CD4-positive, alpha-beta T cell (primary cell): ENCODE measurements at regions of chr20 and their contacts with region 1.

Region 1: DNA sequence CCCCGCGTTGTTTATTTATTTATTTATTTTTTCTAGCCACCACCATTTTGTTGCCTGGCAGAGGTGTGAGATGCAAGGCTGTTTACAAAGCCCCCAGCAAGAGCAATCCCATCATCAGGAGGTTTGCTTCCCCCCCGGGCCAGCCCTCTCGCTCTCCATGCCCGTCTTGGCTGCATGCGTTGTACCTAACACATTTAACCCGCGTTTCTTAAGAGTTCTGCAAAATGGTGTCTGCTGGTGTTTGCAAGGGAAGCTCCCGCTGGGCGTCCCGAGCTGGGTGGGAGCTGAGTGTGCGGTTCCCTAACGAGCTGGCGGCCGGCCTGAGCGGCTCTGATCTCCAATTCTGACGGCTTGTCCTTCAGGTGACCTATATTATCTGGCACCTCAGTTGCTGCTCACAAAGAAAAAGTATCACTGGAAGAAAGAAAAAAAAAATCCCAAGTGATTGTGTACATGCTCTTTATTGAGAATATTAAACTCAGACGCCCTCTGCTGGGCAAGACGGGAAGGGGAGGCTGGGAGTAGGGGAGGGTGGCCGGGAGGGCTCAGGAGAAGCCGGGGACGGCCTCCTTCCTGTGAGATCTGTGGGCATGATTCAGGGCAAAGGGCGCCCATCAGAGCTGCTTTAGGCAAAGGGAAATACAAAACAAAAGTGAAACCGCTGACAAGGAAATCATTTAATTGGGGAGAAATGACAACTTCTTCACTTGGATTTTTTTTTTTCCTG is 154.8 kb downstream of the BCAS1 start:
- DNase-seq: peak; percentile 88 to 99 (median 94)
- ATAC-seq: peak; percentile 94
- H3K4me3 ChIP-seq: peak overlapping the region; percentile 68
- H3K4me3 Mint-ChIP-seq: peak overlapping the region; percentile 88
- H3K27ac ChIP-seq: peak overlapping the region in 1 of 2 donors; percentile 54
- H3K27ac Mint-ChIP-seq: peak overlapping the region; percentile 69
- H3K4me1 ChIP-seq: peaks cover 24% of the 10 kb centered on the region
- H3K4me1 Mint-ChIP-seq: peaks cover 21% of the 10 kb centered on the region
- H3K27me3 ChIP-seq: no peaks in the 10 kb centered on the region
- H3K27me3 Mint-ChIP-seq: no peaks in the 10 kb centered on the region
- CTCF ChIP-seq: peak; percentile 86

Region 2: GRCh38 chr20:53660078-53660909 is 255.3 kb before region 1 on chr20:
- CTCF ChIA-PET with region 1: interaction called, 11 read pairs
- POLR2A ChIA-PET with region 1: interaction called, 6 read pairs
- intact Hi-C with region 1: loop called in 1 of 2 experiments (anchors 5 kb)
- DNase-seq: peak in 9 of 14 experiments; percentile 11 to 50 (median 38)
- ATAC-seq: peak; percentile 41
- H3K4me3 ChIP-seq: peak overlapping the region; percentile 53
- H3K4me3 Mint-ChIP-seq: peak overlapping the region; percentile 91
- H3K27ac ChIP-seq: peak overlapping the region; percentile 49 to 66
- H3K27ac Mint-ChIP-seq: peak overlapping the region; percentile 92
- H3K4me1 ChIP-seq: peaks cover 33% of the 10 kb centered on the region
- H3K4me1 Mint-ChIP-seq: peaks cover 76% of the 10 kb centered on the region
- H3K27me3 ChIP-seq: no peaks in the 10 kb centered on the region
- H3K27me3 Mint-ChIP-seq: no peaks in the 10 kb centered on the region
- CTCF ChIP-seq: no peak

Region 3: GRCh38 chr20:53750827-53751619 is 164.6 kb before region 1 on chr20:
- CTCF ChIA-PET with region 1: interaction called, 4 read pairs
- POLR2A ChIA-PET with region 1: interaction called, 4 read pairs
- intact Hi-C with region 1: loop called (anchors 5 to 10 kb)
- DNase-seq: peak in 8 of 14 experiments; percentile 2 to 75 (median 34)
- ATAC-seq: peak; percentile 57
- H3K4me3 ChIP-seq: no peak overlapping the region
- H3K4me3 Mint-ChIP-seq: peak overlapping the region; percentile 65
- H3K27ac ChIP-seq: peak overlapping the region; percentile 53 to 74
- H3K27ac Mint-ChIP-seq: peak overlapping the region; percentile 93
- H3K4me1 ChIP-seq: peaks cover 60% of the 10 kb centered on the region
- H3K4me1 Mint-ChIP-seq: peaks cover 76% of the 10 kb centered on the region
- H3K27me3 ChIP-seq: no peaks in the 10 kb centered on the region
- H3K27me3 Mint-ChIP-seq: no peaks in the 10 kb centered on the region
- CTCF ChIP-seq: no peak

Region 4: DNA sequence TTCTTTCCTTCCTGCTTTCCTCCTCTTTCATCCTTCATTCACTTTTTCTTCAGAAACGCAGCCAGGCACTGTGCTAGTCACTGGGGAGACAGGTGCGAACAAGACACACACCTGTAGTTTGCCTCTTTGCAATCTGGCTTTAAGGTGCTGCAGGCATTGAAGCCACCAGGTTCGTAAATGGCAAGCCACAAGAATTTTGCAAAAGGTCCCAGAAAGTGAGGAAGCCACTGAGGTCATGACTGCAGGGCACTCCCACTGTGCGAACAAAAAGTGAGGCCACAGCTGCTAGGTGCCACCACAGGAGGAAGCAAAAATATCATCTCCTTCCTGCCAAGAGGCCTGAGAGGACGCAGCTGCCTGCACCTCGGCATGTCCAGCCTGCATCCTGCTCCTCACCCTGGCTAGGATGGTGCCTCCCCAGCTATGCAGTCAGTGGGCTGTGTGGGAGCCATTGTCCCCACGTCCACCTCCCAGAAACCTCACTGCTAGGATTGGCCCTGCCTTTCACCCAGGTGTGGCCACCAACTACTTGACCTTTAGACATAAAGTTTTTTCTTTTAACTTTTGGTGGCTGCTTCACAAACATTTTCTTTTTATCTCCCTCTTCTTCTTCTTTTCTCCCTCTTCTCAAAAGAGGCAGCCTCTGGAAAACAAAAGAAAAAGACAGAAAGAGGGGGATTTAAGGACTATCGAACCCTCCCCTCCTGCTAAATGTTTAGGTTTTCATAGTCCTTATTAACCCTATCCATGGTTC is 76.0 kb before region 1 on chr20:
- CTCF ChIA-PET with region 1: interaction called, 5 read pairs
- POLR2A ChIA-PET with region 1: interaction called, 3 read pairs
- intact Hi-C with region 1: loop called (anchors 5 kb)
- DNase-seq: peak; percentile 43 to 91 (median 58)
- ATAC-seq: peak; percentile 73
- H3K4me3 ChIP-seq: no peak overlapping the region
- H3K4me3 Mint-ChIP-seq: peak overlapping the region; percentile 70
- H3K27ac ChIP-seq: peak overlapping the region; percentile 51 to 54
- H3K27ac Mint-ChIP-seq: peak overlapping the region; percentile 87
- H3K4me1 ChIP-seq: peaks cover 88% of the 10 kb centered on the region
- H3K4me1 Mint-ChIP-seq: peaks cover 70% of the 10 kb centered on the region
- H3K27me3 ChIP-seq: no peaks in the 10 kb centered on the region
- H3K27me3 Mint-ChIP-seq: no peaks in the 10 kb centered on the region
- CTCF ChIP-seq: no peak

Region 5: DNA sequence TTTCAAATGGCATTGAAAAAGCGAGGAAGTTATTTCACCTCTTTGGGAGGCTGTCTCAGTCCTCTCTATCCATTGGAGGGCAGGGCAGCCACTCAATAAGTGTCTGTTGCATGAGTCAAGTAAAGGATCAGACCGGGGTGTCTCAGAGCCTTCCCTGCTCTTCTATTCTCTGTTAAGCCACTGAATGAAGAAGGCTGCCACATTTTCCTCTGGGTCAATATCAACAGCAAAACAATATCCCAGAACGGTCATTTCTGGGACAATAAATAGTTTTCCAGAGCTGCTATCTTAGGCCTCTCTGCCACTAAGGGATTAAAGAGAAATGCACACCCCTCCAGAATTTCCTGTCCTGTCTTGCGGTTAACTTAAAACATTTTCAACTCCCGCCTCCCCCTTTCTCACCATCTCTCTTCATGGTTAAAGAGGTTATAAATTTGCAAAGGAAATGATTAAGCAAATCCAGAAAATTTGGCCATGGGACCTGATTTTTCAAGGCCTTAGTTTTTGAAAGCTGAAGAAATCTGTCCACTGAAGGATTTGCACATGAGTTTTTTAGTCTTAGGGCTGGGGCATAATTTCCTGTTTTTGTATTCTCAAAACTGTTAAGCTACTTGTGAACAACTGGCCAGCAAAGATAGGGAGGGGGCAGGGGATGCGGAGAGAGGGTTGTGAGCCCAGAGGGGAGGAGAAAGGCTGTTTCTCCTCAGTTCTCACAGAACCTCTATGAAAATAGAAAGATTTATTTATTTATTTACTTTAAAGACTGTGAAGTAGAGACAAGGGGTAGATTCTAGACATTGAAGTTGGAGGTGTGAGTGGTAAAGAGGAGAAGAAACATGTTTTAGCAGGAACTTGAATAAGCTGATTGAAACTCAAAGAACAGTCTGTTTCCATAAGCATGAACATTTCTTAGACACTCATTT is 19.1 kb after region 1 on chr20:
- CTCF ChIA-PET with region 1: interaction called, 15 read pairs
- POLR2A ChIA-PET with region 1: interaction called, 12 read pairs
- intact Hi-C with region 1: no loop called
- DNase-seq: peak in 5 of 14 experiments; percentile 23 to 53 (median 45)
- ATAC-seq: peak; percentile 76
- H3K4me3 ChIP-seq: no peak overlapping the region
- H3K4me3 Mint-ChIP-seq: peak overlapping the region; percentile 62
- H3K27ac ChIP-seq: peak overlapping the region in 1 of 2 donors; percentile 20
- H3K27ac Mint-ChIP-seq: peak overlapping the region; percentile 79
- H3K4me1 ChIP-seq: peaks cover 26% of the 10 kb centered on the region
- H3K4me1 Mint-ChIP-seq: peaks cover 59% of the 10 kb centered on the region
- H3K27me3 ChIP-seq: no peaks in the 10 kb centered on the region
- H3K27me3 Mint-ChIP-seq: no peaks in the 10 kb centered on the region
- CTCF ChIP-seq: no peak

Region 6: DNA sequence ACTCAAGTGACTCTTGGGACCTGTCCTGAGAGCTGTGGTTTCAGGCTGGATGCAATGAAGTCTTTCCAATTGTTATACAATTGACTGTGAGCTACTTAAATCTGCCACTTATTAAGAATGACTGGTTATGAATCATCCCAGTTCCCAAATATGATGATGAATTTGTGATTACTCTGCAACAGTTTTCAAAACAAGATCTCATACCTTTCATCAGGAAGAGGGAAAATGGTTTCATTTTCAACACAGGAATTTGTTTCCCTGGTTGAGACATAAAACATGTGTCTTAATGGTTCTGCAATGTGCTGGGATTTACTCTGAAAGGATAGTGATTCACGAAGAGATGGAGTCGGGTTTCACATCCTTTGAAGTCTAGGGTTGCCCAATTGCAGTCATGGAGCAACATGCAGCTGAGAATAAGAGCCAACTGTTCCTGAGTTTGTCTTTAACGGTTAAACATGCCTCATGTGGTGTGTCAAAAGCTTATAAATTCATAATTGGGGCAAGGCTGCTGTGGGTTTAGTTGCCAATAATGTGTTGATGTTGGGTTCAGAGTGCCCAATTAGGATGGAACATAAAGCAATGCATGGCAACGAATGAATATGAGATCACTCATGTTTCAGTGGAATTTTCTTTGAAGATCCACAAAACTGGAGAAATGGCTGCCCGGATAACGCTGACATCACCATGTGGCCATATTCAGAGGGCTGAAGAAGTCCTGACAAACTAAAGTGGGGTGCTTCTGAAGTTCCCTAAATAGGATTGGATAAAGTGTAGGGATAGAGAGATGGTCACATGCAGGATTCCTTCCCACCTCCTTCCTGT is 217.2 kb after region 1 on chr20:
- CTCF ChIA-PET with region 1: no interaction called
- POLR2A ChIA-PET with region 1: no interaction called
- intact Hi-C with region 1: no loop called
- DNase-seq: peak in 2 of 14 experiments; percentile 45 to 53
- ATAC-seq: no peak
- H3K4me3 ChIP-seq: no peak overlapping the region
- H3K4me3 Mint-ChIP-seq: no peak overlapping the region
- H3K27ac ChIP-seq: no peak overlapping the region
- H3K27ac Mint-ChIP-seq: no peak overlapping the region
- H3K4me1 ChIP-seq: no peaks in the 10 kb centered on the region
- H3K4me1 Mint-ChIP-seq: no peaks in the 10 kb centered on the region
- H3K27me3 ChIP-seq: peaks cover 0 to 5% of the 10 kb centered on the region in 2 experiments
- H3K27me3 Mint-ChIP-seq: peaks cover 7% of the 10 kb centered on the region
- CTCF ChIP-seq: no peak

Region 7: DNA sequence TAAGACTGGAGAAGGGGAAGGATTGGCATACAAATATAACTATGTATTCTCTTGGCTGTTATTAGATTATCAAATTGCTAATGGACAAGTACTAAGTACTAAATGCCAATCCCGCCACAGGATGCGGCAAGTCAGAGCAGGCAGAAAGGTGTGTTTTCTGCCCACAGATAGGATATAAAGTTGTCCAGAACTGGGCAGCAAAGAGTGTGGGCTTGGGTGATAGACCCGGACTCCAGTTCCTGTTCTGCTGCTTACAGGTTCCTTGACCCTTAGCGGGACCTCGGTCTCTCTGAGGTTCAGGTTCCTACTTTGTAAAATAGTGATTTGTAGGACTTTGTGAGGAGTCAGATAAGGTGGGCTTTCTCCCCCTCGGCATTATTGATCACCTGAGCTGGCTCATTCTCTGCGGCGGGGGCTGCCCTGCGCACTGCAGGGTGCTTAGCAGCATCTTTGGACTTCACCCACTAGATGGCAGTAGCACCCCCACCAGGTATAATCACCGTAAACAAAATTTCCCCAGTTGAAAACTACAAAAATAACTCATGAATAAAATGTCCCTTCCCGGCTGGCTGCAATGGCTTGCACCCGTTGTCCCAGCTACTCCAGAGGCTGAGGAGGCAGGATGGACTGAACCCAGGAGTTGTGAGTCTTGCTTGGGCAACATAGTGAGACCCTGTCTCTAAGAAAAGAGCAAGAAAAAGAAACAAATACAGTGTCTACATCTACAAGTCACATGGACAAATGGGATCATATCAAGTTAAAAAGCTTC is 752.8 kb after region 1 on chr20:
- CTCF ChIA-PET with region 1: no interaction called
- POLR2A ChIA-PET with region 1: no interaction called
- intact Hi-C with region 1: no loop called
- DNase-seq: peak in 7 of 14 experiments; percentile 1 to 36 (median 11)
- ATAC-seq: no peak
- H3K4me3 ChIP-seq: no peak overlapping the region
- H3K4me3 Mint-ChIP-seq: no peak overlapping the region
- H3K27ac ChIP-seq: no peak overlapping the region
- H3K27ac Mint-ChIP-seq: no peak overlapping the region
- H3K4me1 ChIP-seq: peaks cover 6% of the 10 kb centered on the region
- H3K4me1 Mint-ChIP-seq: no peaks in the 10 kb centered on the region
- H3K27me3 ChIP-seq: no peaks in the 10 kb centered on the region
- H3K27me3 Mint-ChIP-seq: peaks cover 34% of the 10 kb centered on the region
- CTCF ChIP-seq: peak; percentile 33